ENCODE measurements at regions of chr10 and their contacts with region 1.

Region 1: DNA sequence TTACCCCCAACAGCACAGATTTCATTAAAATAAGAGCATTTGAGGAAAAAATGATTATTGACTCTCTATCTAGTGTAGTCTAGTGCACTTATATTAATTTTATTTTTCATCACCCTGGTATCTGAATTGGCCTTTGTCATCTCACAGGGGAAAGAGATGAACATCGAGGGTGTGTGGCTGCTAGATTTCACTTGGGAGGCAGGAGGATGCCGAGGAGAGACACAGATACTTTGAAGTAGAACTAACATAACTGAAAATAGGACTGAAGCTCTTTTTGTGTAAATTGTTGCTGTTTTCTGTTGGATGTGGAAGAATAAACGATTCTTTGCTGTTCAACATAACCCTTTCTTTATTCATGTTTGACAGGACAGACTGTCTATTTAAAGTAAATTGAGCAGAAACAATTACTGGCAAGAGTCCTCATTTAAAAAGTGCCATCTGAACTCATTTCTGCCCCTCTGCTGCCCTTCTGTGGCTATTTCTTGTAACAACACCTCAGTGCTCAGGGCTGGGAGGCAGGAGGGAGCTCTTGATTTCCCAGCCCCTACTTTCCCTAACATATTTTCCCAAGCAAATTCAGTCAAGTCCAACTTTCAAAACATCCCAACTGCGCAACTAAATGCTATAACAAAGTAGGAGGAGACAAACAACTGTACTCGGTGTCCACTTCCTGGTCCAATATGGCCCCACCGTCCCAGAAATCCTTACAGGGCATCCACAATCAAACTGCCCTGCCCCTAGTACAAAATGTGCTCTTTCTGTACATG is 15.6 kb downstream of the LYZL1 start:
- DNase-seq: no peak
- H3K4me3 ChIP-seq: no peak overlapping the region
- CTCF ChIP-seq: peak; percentile 74

Region 2: DNA sequence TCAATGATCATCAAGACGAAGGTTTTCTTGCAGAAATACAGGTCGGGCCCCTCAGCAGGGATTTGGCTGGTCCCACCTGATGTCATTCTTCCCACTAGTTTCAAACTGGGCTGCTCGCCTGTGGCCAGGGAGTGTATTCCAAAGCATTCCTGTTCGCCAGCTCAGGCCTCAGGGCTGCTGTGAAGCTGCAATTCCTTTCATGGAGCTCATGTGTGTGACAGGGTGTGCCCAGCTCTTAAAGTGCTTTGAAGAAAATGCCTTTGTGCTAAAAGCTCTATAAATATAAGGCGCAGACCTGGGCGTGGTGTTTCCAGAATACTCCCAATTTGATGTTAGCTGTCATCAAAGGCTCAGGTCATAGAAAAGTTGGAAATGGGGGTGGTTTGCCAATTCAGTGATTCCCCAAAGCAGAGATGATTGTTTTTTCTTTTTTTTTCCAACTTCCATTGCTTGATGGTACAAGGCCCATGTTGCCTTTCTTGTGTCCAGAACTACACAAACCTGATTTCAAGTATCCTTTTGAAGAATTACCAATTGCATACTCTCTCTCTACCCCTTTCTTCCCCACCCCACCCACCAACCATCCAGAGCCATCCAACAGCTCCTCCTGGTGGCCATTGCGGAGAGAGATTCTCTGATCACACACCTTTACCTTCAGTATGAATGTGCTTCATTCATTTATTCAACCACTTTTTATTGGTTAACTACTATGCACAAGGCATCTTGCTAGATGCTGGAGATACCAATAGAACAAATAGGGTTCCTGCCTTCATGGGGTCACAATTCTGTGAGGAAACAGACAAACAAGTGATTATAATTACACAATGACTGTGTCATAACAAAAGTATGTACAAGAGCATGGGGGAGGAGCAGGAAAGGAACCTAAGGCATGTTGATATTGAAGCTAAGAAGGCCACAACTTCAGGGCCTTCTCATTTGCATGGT is 312.8 kb before region 1 on chr10:
- CTCF ChIA-PET with region 1: interaction called, 14 read pairs
- POLR2A ChIA-PET with region 1: no interaction called
- DNase-seq: no peak
- H3K4me3 ChIP-seq: no peak overlapping the region
- CTCF ChIP-seq: peak; percentile 48

Region 3: GRCh38 chr10:29131952-29132820 is 172.3 kb before region 1 on chr10:
- CTCF ChIA-PET with region 1: interaction called, 12 read pairs
- POLR2A ChIA-PET with region 1: no interaction called
- DNase-seq: no peak
- H3K4me3 ChIP-seq: no peak overlapping the region
- CTCF ChIP-seq: no peak

Region 4: DNA sequence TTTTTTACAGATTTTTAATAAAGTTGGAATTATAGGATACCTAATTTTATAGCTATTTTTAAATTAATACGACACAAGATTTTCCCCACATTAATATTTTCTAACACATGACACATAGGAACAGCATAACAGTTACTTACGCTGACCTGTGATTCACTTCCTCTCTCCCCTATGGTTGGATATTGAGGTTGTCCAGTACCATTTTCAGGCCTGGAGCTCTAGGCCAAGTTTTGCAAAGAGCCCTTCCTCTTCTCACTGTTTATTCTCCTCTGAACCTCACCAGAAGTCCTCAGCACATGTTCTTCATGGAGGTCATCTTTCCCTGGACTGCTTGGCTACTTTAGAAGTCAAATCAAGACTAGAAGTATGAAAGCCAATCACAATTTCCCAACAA is 12.6 kb after region 1 on chr10:
- CTCF ChIA-PET with region 1: interaction called, 18 read pairs
- POLR2A ChIA-PET with region 1: no interaction called
- DNase-seq: no peak
- H3K4me3 ChIP-seq: no peak overlapping the region
- CTCF ChIP-seq: no peak

Region 5: GRCh38 chr10:31215052-31215451 is 1910.6 kb after region 1 on chr10:
- CTCF ChIA-PET with region 1: no interaction called
- POLR2A ChIA-PET with region 1: no interaction called
- DNase-seq: no peak
- H3K4me3 ChIP-seq: no peak overlapping the region
- CTCF ChIP-seq: no peak

Measured in AG04449 (cell line).